ENCODE measurements at regions of chr2 and their contacts with region 1.

Region 1: DNA sequence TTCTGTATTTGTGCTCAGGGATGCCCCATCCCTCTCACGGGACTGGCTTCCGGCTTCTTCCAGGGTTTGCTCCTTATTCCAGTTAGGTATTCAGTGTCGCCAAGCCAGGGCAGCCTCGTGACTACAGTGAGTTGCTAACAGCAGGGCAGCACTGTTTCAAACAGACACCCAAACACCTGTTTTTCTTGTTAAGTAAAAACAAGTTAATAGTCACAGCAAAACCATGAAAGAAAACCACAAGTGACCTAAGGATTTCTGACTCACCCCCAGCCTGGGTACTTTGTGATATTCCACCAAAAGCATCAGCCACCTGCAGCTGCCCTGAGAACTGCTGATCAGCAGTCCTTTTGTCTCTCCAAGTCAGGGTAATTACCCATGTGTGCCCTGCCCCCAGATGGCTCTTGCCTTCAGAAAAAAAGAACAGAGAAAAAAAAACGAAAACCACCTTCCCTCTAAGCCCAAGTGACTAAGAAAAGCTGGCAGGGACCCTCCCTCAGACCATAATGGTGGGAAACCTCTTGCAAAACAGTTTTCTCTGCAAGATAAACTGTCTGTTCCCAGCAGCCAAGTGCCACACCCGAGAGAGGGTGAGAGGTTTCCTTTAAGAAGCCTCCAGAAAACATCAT is 178.2 kb downstream of the ANAPC1 start:
- DNase-seq: peak; percentile 75
- H3K4me3 ChIP-seq: no peak overlapping the region
- H3K27ac ChIP-seq: no peak overlapping the region
- H3K4me1 ChIP-seq: peaks cover 19% of the 10 kb centered on the region
- H3K27me3 ChIP-seq: peaks cover 17% of the 10 kb centered on the region

Region 2: GRCh38 chr2:110804915-110805314 is 900.9 kb before region 1 on chr2:
- in situ Hi-C with region 1: loop called (anchors 25 kb)
- DNase-seq: no peak
- H3K4me3 ChIP-seq: no peak overlapping the region
- H3K27ac ChIP-seq: no peak overlapping the region
- H3K4me1 ChIP-seq: 0 out of 2 replicates have a peak, but pooled peaks cover 4% of the 10 kb centered on the region
- H3K27me3 ChIP-seq: peaks cover 42% of the 10 kb centered on the region

Measured in GM23248 (cell line).